Activated CD4-positive, alpha-beta T cell treated with anti-CD3 and anti-CD28 coated beads for 36 hours (primary cell): ENCODE measurements at regions of chr1 and their contacts with region 1.

Region 1: DNA sequence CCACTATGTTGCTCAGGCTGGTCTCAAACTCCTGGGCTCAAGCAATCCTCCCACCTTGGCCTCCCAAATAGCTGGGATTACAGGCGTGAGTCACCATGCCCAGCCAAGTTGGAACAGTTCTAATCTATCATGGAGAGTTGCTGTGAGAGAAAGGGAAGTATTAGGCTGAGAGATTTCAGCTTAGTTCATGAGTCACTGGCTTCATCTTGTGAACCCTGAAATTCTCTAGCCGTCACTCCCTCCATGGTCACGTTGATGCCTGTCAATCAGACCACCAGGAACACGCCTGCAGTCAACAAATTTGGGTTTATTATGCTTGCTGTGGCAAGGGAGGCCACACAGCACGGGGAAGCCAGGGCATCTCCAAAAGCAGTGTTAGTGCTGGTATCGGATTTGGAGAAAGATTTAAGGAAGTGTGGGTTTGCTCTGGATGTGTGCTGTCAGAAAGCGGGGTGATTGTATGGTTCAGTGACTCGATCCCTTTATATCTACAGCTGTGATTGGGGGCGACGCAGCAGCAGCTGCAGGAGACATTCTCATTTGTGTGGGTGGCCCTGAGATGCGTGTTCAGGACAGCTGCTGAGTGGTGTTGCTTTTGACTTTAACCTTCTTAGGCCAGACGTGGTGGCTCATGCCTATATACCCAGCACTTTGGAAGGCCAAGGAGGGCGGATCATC is 18.7 kb downstream of the UQCRHL start:
- DNase-seq: no peak
- ATAC-seq: no peak
- H3K4me3 Mint-ChIP-seq: no peak overlapping the region
- H3K27ac Mint-ChIP-seq: no peak overlapping the region
- H3K4me1 Mint-ChIP-seq: peaks cover 1% of the 10 kb centered on the region
- H3K27me3 Mint-ChIP-seq: peaks cover 6% of the 10 kb centered on the region

Region 2: GRCh38 chr1:15994590-15995351 is 206.0 kb after region 1 on chr1:
- CTCF ChIA-PET with region 1: interaction called, 4 read pairs
- POLR2A ChIA-PET with region 1: no interaction called
- intact Hi-C with region 1: loop called in 1 of 2 experiments (anchors 1 kb)
- DNase-seq: peak; percentile 77
- ATAC-seq: peak; percentile 92
- H3K4me3 Mint-ChIP-seq: no peak overlapping the region
- H3K27ac Mint-ChIP-seq: peak overlapping the region; percentile 19
- H3K4me1 Mint-ChIP-seq: no peaks in the 10 kb centered on the region
- H3K27me3 Mint-ChIP-seq: no peaks in the 10 kb centered on the region

Region 3: GRCh38 chr1:16032388-16033103 is 243.8 kb after region 1 on chr1:
- CTCF ChIA-PET with region 1: no interaction called
- POLR2A ChIA-PET with region 1: no interaction called
- intact Hi-C with region 1: loop called in 1 of 2 experiments (anchors 1 kb)
- DNase-seq: peak; percentile 82
- ATAC-seq: peak; percentile 95
- H3K4me3 Mint-ChIP-seq: no peak overlapping the region
- H3K27ac Mint-ChIP-seq: no peak overlapping the region
- H3K4me1 Mint-ChIP-seq: peaks cover 2% of the 10 kb centered on the region
- H3K27me3 Mint-ChIP-seq: peaks cover 12% of the 10 kb centered on the region